AG04450 (cell line): ENCODE measurements at regions of chr14 and their contacts with region 1.

Region 1: DNA sequence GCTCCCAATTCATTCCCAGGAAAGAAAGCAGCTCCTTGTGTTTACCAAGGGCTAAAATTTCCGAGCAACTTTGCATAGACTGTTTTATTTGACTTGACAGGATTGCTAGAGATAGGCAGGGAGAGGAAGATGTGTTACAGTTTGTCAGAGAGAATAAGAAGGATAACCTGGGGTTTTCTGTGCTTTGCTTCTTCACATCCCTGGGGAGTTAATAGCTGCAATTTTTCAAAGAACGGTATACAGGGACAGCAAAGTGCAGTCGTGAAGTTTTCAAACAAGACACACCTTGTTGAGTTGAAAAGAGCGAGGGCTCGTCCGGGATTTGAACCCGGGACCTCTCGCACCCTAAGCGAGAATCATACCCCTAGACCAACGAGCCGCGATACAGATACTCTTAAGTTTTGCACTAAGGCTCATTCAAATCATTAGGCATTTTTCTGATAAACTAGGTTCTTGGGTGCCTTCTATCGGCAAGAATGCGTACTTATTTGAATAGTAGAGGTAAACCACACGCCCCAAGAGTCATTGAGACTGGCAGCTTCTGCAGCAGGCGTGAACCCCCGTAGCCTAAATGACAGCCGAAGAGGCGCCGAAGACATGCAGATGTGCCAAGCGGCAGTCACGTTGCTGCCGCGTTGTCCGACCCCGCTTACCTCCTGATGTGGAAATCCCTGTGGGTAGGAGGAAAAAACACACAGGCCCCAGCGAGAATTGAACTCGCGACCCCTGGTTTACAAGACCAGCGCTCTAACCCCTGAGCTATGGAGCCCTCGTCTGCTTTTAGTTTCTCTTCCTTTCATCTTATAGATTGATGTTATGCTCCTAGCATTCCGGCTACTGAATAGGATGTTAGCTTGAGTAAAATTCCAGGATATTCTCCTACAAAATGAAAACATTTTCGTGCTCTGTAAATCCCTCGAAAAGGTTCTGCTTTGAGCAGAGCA is 22.2 kb upstream of the RNASE12 start:
- DNase-seq: peak; percentile 97
- H3K4me3 ChIP-seq: peak overlapping the region; percentile 70
- H3K27ac ChIP-seq: peak overlapping the region; percentile 42
- H3K27me3 ChIP-seq: no peaks in the 10 kb centered on the region
- CTCF ChIP-seq: peak; percentile 76

Region 2: DNA sequence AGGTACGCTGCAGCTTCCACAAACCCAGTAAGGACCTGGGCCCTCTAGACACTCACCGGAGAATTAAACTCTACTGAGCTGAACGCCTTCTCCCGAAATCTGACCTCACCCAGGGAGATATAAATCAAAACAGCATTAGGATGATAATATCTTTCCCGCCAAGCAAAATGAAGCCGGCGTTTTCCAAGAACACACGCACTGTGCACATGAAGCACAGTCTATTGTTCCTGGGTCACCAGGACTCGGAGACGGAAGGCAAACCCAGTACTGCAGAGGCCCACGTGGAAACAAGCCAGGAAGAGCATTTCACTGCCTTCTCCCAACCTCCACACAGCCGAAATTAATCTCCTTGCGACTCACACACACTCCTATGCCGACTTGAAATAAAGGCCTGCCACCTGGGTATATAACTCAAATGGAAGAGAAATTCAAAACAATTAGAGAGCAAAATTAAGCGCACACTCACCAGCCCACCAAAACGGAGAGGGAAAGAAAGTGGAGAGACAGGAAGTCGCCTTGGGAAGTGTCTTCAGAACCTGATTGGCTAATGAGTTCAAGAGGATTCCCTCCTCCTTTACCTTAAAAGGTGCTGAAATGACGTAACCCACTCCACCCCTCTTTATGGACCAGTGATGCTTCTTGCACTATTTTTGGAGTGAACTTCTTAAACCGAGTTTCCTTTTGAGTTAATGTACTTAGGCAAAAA is 280.4 kb before region 1 on chr14 and contains the start of gene CCNB1IP1:
- CTCF ChIA-PET with region 1: interaction called, 71 read pairs
- POLR2A ChIA-PET with region 1: no interaction called
- DNase-seq: peak; percentile 48
- H3K4me3 ChIP-seq: peak within 1 kb of the TSS; percentile 82
- H3K27ac ChIP-seq: peak within 1 kb of the TSS; percentile 59
- H3K27me3 ChIP-seq: no peaks in the 10 kb centered on the region
- CTCF ChIP-seq: no peak
- polyA plus RNA-seq, gene CCNB1IP1: 54.2 and 69.2 TPM in 2 replicates

Region 3: DNA sequence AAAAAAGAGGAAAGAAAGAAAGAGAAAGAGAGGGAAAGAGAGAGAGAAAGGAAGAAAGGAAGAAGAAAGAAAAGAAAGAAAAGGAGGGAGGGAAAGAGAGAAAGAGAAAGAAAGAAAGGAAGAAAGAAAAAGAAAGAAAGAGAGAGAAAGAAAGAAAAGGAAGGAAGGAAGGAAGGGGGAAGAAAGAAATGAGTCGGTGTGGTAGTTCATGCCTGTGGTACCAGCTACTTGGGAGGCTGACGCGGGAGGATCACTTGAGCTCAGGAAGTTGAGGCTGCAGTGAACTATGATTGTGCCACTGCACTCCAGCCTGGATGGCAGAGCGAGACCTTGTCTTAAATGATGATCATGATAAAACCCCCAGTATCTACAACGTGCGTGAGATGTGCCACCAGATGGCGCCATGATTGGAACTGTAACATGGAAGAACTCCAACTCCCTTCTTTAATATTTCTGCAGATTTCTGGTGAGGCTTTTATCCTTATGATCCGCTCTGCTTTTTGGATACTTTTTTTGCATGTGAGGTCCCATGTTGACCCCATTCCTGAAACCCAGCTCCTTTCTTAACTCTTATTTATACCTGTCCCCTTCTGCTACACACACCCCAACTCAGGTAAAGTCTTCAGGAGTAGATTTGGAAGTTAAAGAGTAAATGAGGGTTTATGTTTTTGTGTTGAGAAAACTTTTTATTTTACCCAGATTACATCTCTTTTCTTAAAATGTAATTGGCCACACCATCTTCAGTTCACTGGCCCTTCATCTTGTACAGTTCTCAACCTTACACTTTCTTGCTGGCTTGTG is 82.4 kb before region 1 on chr14:
- CTCF ChIA-PET with region 1: interaction called, 18 read pairs
- POLR2A ChIA-PET with region 1: no interaction called
- DNase-seq: peak; percentile 50
- H3K4me3 ChIP-seq: no peak overlapping the region
- H3K27ac ChIP-seq: no peak overlapping the region
- H3K27me3 ChIP-seq: peaks cover 4% of the 10 kb centered on the region
- CTCF ChIP-seq: peak; percentile 72

Region 4: GRCh38 chr14:20682435-20683124 is 69.2 kb after region 1 on chr14:
- CTCF ChIA-PET with region 1: interaction called, 22 read pairs
- POLR2A ChIA-PET with region 1: interaction called, 13 read pairs
- DNase-seq: no peak
- H3K4me3 ChIP-seq: peak overlapping the region; percentile 86
- H3K27ac ChIP-seq: peak overlapping the region; percentile 99
- H3K27me3 ChIP-seq: no peaks in the 10 kb centered on the region
- CTCF ChIP-seq: 0 out of 2 replicates have a peak, but pooled peaks have one; percentile 14